ENCODE measurements at regions of chr11 and their contacts with region 1.

Region 1: GRCh38 chr11:6377902-6378639 is 12.2 kb upstream of the SMPD1 start:
- DNase-seq: peak in 1 of 35 experiments; percentile 43
- ATAC-seq: peak; percentile 85 to 93 (median 88)
- H3K4me3 ChIP-seq: peak overlapping the region in 1 of 2 donors; percentile 2
- H3K4me3 Mint-ChIP-seq: peak overlapping the region in 2 of 3 donors; percentile 49 to 65
- H3K27ac ChIP-seq: peak overlapping the region; percentile 18
- H3K27ac Mint-ChIP-seq: peak overlapping the region; percentile 89 to 90
- H3K4me1 ChIP-seq: peaks cover 12 to 15% of the 10 kb centered on the region in 2 experiments
- H3K4me1 Mint-ChIP-seq: peaks cover 26 to 34% (median 29%) of the 10 kb centered on the region in 3 donors
- H3K27me3 ChIP-seq: peaks cover 0 to 6% of the 10 kb centered on the region in 2 experiments
- H3K27me3 Mint-ChIP-seq: no peaks in the 10 kb centered on the region

Region 2: DNA sequence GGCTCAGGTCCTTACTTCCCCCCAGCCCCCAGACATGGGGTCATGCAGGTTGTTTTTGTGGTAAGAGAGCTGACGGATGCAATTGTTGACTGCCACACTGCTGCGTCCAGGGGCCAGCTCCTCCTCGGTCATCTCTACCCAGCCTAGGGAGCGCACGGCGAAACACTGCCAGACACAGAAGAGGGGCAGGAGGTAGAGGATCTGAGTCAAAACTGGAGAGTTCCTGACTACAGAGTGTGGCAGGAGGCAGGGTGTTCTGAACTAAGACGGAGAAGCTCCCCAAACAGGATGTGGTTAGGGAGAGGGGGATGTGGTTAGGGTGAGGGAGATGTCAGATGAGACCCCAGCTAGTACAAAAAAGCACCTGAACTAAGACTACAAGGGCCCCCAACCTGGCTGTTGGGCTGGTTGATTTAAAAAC is 24.5 kb after region 1 on chr11:
- CTCF ChIA-PET with region 1: interaction called, 16 to 29 read pairs
- POLR2A ChIA-PET with region 1: interaction called, 4 to 17 read pairs
- DNase-seq: peak; percentile 51 to 94 (median 83)
- ATAC-seq: peak; percentile 87 to 89 (median 88)
- H3K4me3 ChIP-seq: peak overlapping the region in 1 of 2 donors; percentile 38
- H3K4me3 Mint-ChIP-seq: peak overlapping the region; percentile 73 to 92 (median 78)
- H3K27ac ChIP-seq: peak overlapping the region; percentile 90
- H3K27ac Mint-ChIP-seq: peak overlapping the region; percentile 96 to 99
- H3K4me1 ChIP-seq: peaks cover 62 to 75% of the 10 kb centered on the region in 2 experiments
- H3K4me1 Mint-ChIP-seq: peaks cover 93 to 98% (median 94%) of the 10 kb centered on the region in 3 donors
- H3K27me3 ChIP-seq: no peaks in the 10 kb centered on the region
- H3K27me3 Mint-ChIP-seq: no peaks in the 10 kb centered on the region

Region 3: DNA sequence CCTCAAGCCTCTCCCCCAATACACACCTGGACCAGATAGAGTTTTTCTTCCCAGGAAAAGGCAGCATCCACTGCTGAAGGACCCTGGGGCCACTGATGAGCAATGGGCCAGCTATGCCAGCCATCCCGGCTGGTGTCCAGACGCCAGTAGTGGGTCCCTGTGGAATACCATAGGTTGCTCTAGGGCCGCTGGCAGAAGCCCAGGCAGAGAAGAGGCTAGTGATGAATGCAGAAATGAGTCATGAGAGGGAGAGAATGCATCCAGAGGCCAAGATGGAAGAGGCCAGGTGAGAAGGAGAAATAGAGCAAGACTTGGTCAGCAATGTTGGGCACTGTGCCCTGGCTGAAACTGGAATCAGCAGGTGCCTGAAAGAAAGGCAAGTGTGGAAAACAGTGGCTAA is 53.8 kb after region 1 on chr11:
- CTCF ChIA-PET with region 1: interaction called, 7 to 11 read pairs
- POLR2A ChIA-PET with region 1: interaction called in 1 of 2 experiments, 8 read pairs
- DNase-seq: no peak
- ATAC-seq: no peak
- H3K4me3 ChIP-seq: no peak overlapping the region
- H3K4me3 Mint-ChIP-seq: no peak overlapping the region
- H3K27ac ChIP-seq: no peak overlapping the region
- H3K27ac Mint-ChIP-seq: no peak overlapping the region
- H3K4me1 ChIP-seq: no peaks in the 10 kb centered on the region
- H3K4me1 Mint-ChIP-seq: peaks cover 0 to 23% (median 2%) of the 10 kb centered on the region in 3 donors
- H3K27me3 ChIP-seq: no peaks in the 10 kb centered on the region
- H3K27me3 Mint-ChIP-seq: no peaks in the 10 kb centered on the region

Region 4: DNA sequence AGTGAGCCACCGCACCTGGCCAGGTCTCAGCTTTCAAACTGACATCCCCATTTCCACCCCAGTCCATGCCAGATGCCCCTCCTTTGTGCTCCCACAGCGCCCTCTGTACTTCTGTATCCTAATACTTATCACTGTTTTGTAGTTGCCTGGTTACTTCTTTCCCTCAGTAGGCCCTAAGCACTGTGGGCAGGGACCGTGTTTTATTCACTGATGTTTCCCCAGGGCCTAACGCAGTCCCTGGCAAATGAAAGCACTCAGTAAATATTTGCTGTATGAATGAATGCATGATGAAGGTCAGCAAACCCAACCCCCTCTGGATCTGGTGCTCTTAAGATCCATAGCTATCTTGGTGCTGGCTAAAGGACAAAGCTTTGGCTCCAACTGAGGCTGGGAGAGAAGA is 97.9 kb after region 1 on chr11:
- CTCF ChIA-PET with region 1: interaction called, 6 to 16 read pairs
- POLR2A ChIA-PET with region 1: interaction called in 1 of 2 experiments, 8 read pairs
- DNase-seq: no peak
- ATAC-seq: no peak
- H3K4me3 ChIP-seq: no peak overlapping the region
- H3K4me3 Mint-ChIP-seq: peak overlapping the region in 1 of 3 donors; percentile 23
- H3K27ac ChIP-seq: no peak overlapping the region
- H3K27ac Mint-ChIP-seq: peak overlapping the region; percentile 23 to 91
- H3K4me1 ChIP-seq: peaks cover 17 to 27% of the 10 kb centered on the region in 2 experiments
- H3K4me1 Mint-ChIP-seq: peaks cover 42 to 44% (median 44%) of the 10 kb centered on the region in 3 donors
- H3K27me3 ChIP-seq: no peaks in the 10 kb centered on the region
- H3K27me3 Mint-ChIP-seq: no peaks in the 10 kb centered on the region

Region 5: DNA sequence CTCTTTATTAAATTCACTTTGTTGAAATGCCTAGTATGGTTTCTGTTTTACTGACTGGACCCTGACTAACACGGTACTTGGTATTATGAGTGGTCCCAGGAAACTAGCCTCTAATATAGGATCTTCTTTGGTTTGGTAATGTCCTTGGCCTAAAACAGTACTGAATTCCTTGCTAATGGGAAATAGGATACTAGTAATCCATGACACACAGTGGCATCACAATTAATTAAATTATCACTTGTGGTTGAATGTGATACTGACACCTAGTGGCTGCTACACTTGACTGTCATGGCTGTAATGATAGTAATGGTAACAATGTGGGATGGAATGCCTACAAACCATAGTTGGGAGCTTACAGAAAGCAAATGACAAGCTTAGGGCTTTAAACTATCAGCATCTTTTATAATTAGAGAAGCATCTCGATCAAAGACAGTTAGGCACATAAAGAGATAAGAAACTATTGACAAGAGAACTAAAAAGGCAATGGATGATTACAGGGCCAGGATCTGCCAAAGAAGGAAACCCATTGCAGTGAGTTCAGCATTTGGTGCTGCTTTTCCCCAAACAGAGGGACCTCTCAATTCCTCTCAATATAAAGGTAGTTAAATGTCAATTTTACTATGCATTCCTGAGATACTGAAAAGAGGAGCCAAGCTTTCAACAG is 127.6 kb after region 1 on chr11:
- CTCF ChIA-PET with region 1: interaction called, 10 to 95 read pairs
- POLR2A ChIA-PET with region 1: no interaction called
- DNase-seq: peak in 5 of 35 experiments; percentile 12 to 65 (median 17)
- ATAC-seq: peak in 2 of 4 experiments; percentile 36 to 61
- H3K4me3 ChIP-seq: no peak overlapping the region
- H3K4me3 Mint-ChIP-seq: no peak overlapping the region
- H3K27ac ChIP-seq: no peak overlapping the region
- H3K27ac Mint-ChIP-seq: no peak overlapping the region
- H3K4me1 ChIP-seq: no peaks in the 10 kb centered on the region
- H3K4me1 Mint-ChIP-seq: peaks cover 0 to 3% (median 0%) of the 10 kb centered on the region in 3 donors
- H3K27me3 ChIP-seq: no peaks in the 10 kb centered on the region
- H3K27me3 Mint-ChIP-seq: no peaks in the 10 kb centered on the region

Region 6: DNA sequence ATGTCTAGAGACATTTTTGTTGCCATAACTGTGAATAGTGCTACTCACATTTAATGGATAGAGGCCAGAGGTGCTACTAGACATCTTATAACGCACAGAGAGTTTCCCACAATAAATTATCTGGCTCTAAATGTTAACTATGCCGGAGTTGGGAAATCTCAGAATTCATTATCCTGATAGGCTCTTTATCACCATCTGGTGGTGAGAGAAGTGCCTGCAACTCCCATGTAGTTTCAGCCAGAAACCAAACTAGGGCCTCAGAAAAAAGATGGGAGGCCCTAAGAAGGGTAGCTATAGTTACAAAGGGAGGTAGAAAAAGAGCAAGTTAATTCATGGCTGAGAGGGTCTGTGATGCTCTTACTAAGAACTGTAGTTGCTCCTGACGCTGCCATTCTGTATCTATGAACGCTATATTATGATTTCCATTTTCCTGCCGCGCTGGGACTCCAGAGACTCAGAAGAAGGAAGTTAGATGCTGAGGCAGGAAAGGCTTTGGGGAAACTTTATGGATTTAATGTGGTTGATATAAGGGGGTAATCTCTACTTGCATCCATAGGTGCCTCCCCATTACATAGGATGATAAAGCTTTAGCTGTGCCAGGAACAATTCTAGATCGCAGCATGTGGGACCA is 327.9 kb after region 1 on chr11:
- CTCF ChIA-PET with region 1: interaction called, 3 to 10 read pairs
- POLR2A ChIA-PET with region 1: no interaction called
- DNase-seq: peak in 22 of 35 experiments; percentile 4 to 72 (median 28)
- ATAC-seq: peak; percentile 53 to 71 (median 62)
- H3K4me3 ChIP-seq: no peak overlapping the region
- H3K4me3 Mint-ChIP-seq: no peak overlapping the region
- H3K27ac ChIP-seq: no peak overlapping the region
- H3K27ac Mint-ChIP-seq: peak overlapping the region; percentile 41 to 72
- H3K4me1 ChIP-seq: peaks cover 0 to 2% of the 10 kb centered on the region in 2 experiments
- H3K4me1 Mint-ChIP-seq: peaks cover 24 to 29% (median 29%) of the 10 kb centered on the region in 3 donors
- H3K27me3 ChIP-seq: no peaks in the 10 kb centered on the region
- H3K27me3 Mint-ChIP-seq: no peaks in the 10 kb centered on the region